AG04450 (cell line): ENCODE measurements at regions of chr9 and their contacts with region 1.

Region 1: GRCh38 chr9:35628389-35628991 is 10.3 kb upstream of the CD72 start:
- DNase-seq: no peak
- H3K4me3 ChIP-seq: no peak overlapping the region
- H3K27ac ChIP-seq: no peak overlapping the region
- H3K27me3 ChIP-seq: peaks cover 5% of the 10 kb centered on the region
- CTCF ChIP-seq: no peak

Region 2: GRCh38 chr9:35603987-35604577 is 24.4 kb before region 1 on chr9:
- CTCF ChIA-PET with region 1: interaction called, 10 read pairs
- POLR2A ChIA-PET with region 1: no interaction called
- DNase-seq: peak; percentile 99
- H3K4me3 ChIP-seq: peak overlapping the region; percentile 77
- H3K27ac ChIP-seq: peak overlapping the region; percentile 98
- H3K27me3 ChIP-seq: no peaks in the 10 kb centered on the region
- CTCF ChIP-seq: peak; percentile 86

Region 3: GRCh38 chr9:35675732-35676392 is 47.4 kb after region 1 on chr9:
- CTCF ChIA-PET with region 1: no interaction called
- POLR2A ChIA-PET with region 1: no interaction called
- DNase-seq: no peak
- H3K4me3 ChIP-seq: peak overlapping the region; percentile 51
- H3K27ac ChIP-seq: no peak overlapping the region
- H3K27me3 ChIP-seq: no peaks in the 10 kb centered on the region
- CTCF ChIP-seq: no peak

Region 4: GRCh38 chr9:35781066-35781465 is 152.6 kb after region 1 on chr9:
- CTCF ChIA-PET with region 1: no interaction called
- POLR2A ChIA-PET with region 1: no interaction called
- DNase-seq: no peak
- H3K4me3 ChIP-seq: no peak overlapping the region
- H3K27ac ChIP-seq: no peak overlapping the region
- H3K27me3 ChIP-seq: peaks cover 23% of the 10 kb centered on the region
- CTCF ChIP-seq: no peak

Region 5: DNA sequence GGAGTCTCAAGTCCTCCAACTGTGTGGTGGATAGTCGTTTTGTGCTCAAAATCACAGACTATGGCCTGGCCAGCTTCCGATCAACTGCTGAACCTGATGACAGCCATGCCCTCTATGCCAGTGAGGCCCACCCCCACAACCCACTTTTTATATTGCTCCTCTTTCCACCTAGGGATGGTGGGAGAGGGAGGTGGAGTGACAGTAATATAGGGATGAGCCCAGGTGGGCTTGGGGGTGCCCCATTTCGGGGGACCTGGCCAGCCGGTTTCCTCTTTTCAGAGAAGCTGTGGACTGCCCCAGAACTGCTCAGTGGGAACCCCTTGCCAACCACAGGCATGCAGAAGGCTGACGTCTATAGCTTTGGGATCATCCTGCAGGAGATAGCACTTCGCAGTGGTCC is 177.1 kb after region 1 on chr9:
- CTCF ChIA-PET with region 1: no interaction called
- POLR2A ChIA-PET with region 1: no interaction called
- DNase-seq: no peak
- H3K4me3 ChIP-seq: no peak overlapping the region
- H3K27ac ChIP-seq: no peak overlapping the region
- H3K27me3 ChIP-seq: no peaks in the 10 kb centered on the region
- CTCF ChIP-seq: no peak